Activated CD4-positive, alpha-beta T cell treated with anti-CD3 and anti-CD28 coated beads for 36 hours (primary cell): ENCODE measurements at regions of chr2 and their contacts with region 1.

Region 1: DNA sequence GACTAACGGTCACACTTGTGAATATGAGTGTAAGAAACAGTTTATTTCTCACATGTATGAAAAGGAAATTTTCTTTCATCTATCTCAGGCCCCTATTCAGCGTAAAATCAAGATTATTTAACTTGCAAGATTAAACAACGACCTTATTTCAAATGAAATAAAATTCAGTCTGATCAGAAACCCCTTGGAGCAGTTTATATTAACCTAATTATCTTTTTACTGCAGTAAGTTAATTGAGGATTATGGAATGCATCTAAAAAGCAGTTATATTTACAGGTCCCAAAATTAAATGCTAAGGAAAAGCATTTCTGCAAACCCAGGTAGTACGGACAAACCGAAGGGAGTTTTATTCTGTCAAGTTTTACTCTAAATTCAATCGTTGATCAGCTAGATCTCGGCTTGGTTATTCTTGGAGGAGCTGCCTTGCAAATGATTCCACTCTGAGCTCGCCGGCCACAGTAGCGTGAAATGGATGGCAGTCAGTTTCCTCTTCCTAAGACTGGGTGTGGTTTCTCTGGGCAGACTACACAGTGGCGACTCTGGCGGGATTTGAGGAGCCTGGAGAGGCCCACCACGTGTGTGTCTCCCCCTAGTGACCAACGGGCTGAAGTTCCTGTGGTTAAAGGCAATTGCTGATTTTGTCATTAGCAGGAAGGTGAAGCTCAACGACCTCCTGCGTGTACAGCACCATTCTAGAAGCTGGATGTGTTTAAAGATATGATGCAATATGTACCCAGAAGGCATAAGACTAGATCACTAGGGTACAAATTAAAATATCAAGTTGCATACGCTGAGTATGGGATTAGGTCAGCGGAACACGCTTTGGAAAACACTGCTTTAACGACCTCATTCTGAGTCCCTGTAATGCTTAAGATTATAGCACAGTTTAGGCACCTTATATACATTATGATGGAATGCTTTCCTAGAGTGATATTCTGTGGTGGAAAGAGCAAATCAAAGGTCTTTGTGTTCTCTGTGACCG is 36.4 kb downstream of the PRKRA start:
- DNase-seq: peak; percentile 90
- ATAC-seq: peak; percentile 83
- H3K4me3 Mint-ChIP-seq: peak overlapping the region; percentile 67
- H3K27ac Mint-ChIP-seq: peak overlapping the region; percentile 71
- H3K4me1 Mint-ChIP-seq: peaks cover 11% of the 10 kb centered on the region
- H3K27me3 Mint-ChIP-seq: no peaks in the 10 kb centered on the region

Region 2: DNA sequence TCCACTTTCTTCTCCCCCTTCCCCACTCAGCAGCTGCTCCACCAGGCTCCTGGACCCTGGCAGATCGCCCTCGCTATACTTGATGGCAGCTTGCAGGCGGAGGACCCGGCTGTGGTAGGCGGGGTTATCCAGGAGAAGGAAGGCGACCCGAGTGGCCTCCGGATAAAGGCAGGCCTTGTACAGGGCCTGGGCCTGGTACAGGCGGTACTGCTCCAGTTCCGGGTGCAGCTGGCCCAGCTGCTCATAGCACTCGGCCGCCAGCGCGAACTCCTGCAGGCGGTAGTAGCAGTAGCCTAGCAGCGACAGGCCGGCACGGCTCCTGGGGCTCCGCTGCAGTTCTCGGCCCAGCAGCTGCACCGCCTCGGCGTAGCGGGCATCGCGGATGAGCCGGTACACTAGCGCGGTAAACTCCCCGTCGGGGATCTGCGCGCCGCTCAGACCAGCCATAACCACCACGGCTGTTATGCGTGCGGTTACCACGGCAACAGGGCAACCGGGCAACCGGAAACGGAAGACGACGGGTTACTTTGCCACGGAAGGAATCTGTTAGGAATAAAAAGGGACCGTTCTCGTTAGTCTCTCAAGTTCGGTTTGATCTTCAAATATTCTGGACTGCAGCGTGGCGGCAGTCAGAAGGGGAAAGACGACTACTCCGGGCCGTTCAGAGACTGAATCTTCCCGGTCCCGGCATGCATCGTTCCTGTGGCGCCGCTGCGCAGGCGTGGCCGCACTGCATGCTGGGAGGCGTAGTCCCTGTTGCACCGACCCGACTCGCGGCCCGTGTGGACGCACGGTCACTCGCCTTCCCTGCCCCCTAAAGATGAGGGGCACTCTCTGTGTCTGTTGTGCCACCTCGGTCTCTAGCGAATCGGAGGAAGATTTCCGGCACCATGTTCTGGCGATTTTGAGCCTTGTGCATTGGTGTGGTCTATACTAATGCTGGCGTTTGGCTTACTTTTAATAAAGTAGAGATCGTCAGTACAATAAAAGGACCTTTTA is 796.0 kb before region 1 on chr2:
- CTCF ChIA-PET with region 1: no interaction called
- POLR2A ChIA-PET with region 1: no interaction called
- intact Hi-C with region 1: loop called in 1 of 2 experiments (anchors 10 kb)
- DNase-seq: peak; percentile 95
- ATAC-seq: peak; percentile 95
- H3K4me3 Mint-ChIP-seq: peak overlapping the region; percentile 90
- H3K27ac Mint-ChIP-seq: peak overlapping the region; percentile 98
- H3K4me1 Mint-ChIP-seq: no peaks in the 10 kb centered on the region
- H3K27me3 Mint-ChIP-seq: no peaks in the 10 kb centered on the region

Region 3: DNA sequence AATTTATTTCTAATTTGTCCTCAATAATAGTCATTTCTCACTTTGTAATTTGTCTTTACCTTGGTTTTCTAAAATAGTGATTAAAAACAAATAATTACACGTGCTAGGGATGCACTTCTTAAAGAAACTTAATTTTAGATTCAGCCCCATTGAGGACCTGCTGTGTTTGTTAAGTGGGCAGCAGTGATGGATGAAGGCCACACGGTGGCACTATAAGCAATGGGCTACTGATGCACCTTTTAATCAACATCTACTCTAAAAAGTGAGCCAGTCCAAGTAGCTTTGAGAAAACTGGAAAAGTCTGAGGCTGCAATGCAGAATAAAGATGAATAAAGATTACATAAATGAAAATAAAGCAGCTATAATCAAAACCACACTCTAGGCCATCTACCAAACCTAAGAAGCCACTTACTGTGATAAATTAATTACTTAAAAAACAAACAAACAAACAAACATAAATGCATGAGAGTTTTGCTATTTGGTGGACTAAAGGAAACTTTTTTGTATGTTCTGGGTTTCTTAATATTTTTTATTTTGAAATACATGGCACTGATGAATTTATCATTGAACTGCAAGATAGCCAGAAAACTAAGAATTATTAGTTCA is 431.3 kb before region 1 on chr2:
- CTCF ChIA-PET with region 1: interaction called, 5 read pairs
- POLR2A ChIA-PET with region 1: no interaction called
- intact Hi-C with region 1: loop called in 1 of 2 experiments (anchors 2 kb)
- DNase-seq: peak; percentile 43
- ATAC-seq: no peak
- H3K4me3 Mint-ChIP-seq: no peak overlapping the region
- H3K27ac Mint-ChIP-seq: no peak overlapping the region
- H3K4me1 Mint-ChIP-seq: no peaks in the 10 kb centered on the region
- H3K27me3 Mint-ChIP-seq: peaks cover 3% of the 10 kb centered on the region

Region 4: GRCh38 chr2:178193823-178194599 is 220.5 kb before region 1 on chr2 and contains the start of gene OSBPL6:
- CTCF ChIA-PET with region 1: no interaction called
- POLR2A ChIA-PET with region 1: no interaction called
- intact Hi-C with region 1: loop called (anchors 2 to 5 kb)
- DNase-seq: peak; percentile 82
- ATAC-seq: peak; percentile 91
- H3K4me3 Mint-ChIP-seq: peak within 1 kb of the TSS; percentile 67
- H3K27ac Mint-ChIP-seq: no peak within 1 kb of the TSS
- H3K4me1 Mint-ChIP-seq: peaks cover 7% of the 10 kb centered on the region
- H3K27me3 Mint-ChIP-seq: peaks cover 45% of the 10 kb centered on the region
- total RNA-seq, gene OSBPL6: 2.5 to 3.3 TPM

Region 5: GRCh38 chr2:178397002-178397605 is 17.5 kb before region 1 on chr2:
- CTCF ChIA-PET with region 1: interaction called, 91 read pairs
- POLR2A ChIA-PET with region 1: no interaction called
- intact Hi-C with region 1: loop called (anchors 1 kb)
- DNase-seq: no peak
- ATAC-seq: peak; percentile 65
- H3K4me3 Mint-ChIP-seq: no peak overlapping the region
- H3K27ac Mint-ChIP-seq: no peak overlapping the region
- H3K4me1 Mint-ChIP-seq: no peaks in the 10 kb centered on the region
- H3K27me3 Mint-ChIP-seq: no peaks in the 10 kb centered on the region

Region 6: DNA sequence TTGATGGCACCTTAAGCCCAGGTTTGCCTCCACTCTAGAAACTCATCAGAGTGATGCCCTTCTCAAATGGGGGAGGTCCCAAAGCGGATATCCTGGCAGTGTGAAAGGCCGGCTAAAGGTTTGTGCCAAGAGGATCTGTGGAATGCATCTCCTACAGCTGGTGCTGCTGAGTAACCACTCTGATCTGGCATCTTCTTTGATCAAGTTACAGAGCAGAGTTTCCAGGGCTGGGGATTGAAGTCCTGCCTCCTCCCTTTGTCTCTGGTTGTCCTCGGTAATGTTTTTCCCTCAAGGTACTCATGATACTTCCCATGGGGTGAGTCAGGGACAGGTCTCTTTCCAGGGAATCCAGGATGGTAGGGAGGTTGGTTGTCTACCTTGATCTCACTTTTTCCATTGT is 11.8 kb after region 1 on chr2:
- CTCF ChIA-PET with region 1: interaction called, 16 read pairs
- POLR2A ChIA-PET with region 1: no interaction called
- intact Hi-C with region 1: no loop called
- DNase-seq: no peak
- ATAC-seq: no peak
- H3K4me3 Mint-ChIP-seq: no peak overlapping the region
- H3K27ac Mint-ChIP-seq: no peak overlapping the region
- H3K4me1 Mint-ChIP-seq: no peaks in the 10 kb centered on the region
- H3K27me3 Mint-ChIP-seq: no peaks in the 10 kb centered on the region

Region 7: GRCh38 chr2:178478439-178479274 is 64.1 kb after region 1 on chr2 and contains the start of gene FKBP7:
- CTCF ChIA-PET with region 1: interaction called, 6 read pairs
- POLR2A ChIA-PET with region 1: interaction called, 4 read pairs
- intact Hi-C with region 1: loop called in 1 of 2 experiments (anchors 1 kb)
- DNase-seq: peak; percentile 89
- ATAC-seq: peak; percentile 73
- H3K4me3 Mint-ChIP-seq: peak within 1 kb of the TSS; percentile 89
- H3K27ac Mint-ChIP-seq: peak within 1 kb of the TSS; percentile 97
- H3K4me1 Mint-ChIP-seq: peaks cover 38% of the 10 kb centered on the region
- H3K27me3 Mint-ChIP-seq: no peaks in the 10 kb centered on the region
- total RNA-seq, gene FKBP7: 3.4 to 4.8 TPM

Region 8: DNA sequence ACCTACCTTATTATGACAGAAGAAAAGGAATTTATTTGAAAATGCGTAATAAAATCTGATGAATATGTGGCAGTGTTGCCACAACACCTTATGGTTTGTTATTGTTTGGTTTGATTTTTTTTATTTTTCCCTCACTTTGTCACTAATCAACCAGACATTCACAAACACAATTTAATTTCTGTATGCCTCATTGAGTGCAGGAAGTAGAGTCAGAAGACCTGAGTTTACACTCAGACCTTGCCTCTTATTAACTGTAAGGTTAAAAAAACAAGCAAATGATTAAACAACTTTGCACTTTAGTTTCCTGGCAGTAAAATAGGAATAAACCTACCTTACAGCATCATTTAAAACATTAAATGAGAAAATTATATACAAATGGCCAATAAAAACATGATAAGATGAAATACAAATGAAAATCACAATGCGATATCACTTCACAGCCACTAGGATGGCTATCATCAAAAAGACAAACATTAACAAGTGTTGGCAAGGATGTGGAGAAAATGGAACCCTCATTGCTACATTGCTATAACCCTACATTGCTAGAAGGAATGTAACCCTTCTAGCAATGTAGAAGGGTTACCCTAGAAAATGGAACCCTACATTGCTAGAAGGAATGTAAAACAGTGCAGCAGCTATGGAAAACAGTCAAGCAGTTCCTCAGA is 846.7 kb after region 1 on chr2:
- CTCF ChIA-PET with region 1: no interaction called
- POLR2A ChIA-PET with region 1: no interaction called
- intact Hi-C with region 1: no loop called
- DNase-seq: no peak
- ATAC-seq: no peak
- H3K4me3 Mint-ChIP-seq: no peak overlapping the region
- H3K27ac Mint-ChIP-seq: no peak overlapping the region
- H3K4me1 Mint-ChIP-seq: peaks cover 16% of the 10 kb centered on the region
- H3K27me3 Mint-ChIP-seq: peaks cover 18% of the 10 kb centered on the region